ENCODE measurements at regions of chr2 and their contacts with region 1.

Region 1: DNA sequence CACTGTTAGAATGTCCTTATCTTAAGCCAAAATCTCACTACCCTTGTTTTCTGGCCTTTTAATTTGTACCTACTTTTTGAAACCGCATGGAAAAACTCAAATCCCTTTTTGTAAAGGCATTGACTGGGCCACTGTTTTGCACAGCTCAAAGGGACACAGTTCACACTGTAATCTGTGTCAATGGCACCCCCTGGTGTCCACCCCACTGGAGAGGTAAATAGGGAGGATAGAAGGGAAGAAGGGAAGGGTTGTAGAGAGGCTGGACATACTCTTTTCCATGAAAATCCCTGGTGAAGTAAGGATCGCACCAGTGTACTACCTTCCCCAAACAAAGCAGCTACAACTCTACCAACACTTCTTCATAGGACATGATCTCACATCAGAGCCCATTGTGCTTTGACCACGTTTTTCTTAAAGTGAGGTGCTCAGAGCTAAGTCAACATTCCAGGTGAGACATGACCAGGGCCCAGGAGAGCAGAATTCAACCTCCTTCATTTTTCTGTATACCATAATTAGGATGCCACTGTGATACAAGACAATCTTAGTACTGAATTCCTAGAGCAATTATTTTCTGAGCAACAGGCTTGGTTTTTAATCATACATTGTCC is 92.4 kb upstream of the RMDN2 start:
- DNase-seq: peak; percentile 92
- H3K4me3 Mint-ChIP-seq: no peak overlapping the region
- H3K27ac Mint-ChIP-seq: no peak overlapping the region
- H3K4me1 Mint-ChIP-seq: peaks cover 13% of the 10 kb centered on the region
- H3K27me3 Mint-ChIP-seq: no peaks in the 10 kb centered on the region

Region 2: GRCh38 chr2:37168217-37168981 is 664.3 kb before region 1 on chr2:
- CTCF ChIA-PET with region 1: interaction called, 5 read pairs
- intact Hi-C with region 1: loop called (anchors 1 kb)
- DNase-seq: peak; percentile 52
- H3K4me3 Mint-ChIP-seq: no peak overlapping the region
- H3K27ac Mint-ChIP-seq: no peak overlapping the region
- H3K4me1 Mint-ChIP-seq: no peaks in the 10 kb centered on the region
- H3K27me3 Mint-ChIP-seq: no peaks in the 10 kb centered on the region

Region 3: DNA sequence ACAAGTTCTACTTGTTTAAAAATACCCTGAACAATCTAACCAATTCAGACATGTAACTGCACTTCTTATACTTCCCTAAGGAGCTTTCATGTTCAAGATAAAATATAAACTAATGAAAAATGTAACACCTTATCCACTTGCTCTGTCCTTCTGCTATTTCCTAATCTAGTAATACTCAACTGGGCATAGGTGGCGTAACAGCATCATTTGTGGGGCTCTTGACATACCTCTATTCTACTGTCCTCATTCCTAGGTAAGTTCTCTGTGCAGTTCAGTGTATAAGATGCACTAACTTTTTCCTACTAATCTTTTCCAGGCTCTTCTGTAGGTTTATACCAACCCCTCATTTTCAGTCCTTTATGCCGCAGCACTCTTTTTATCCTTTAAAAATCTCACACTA is 544.7 kb before region 1 on chr2:
- CTCF ChIA-PET with region 1: interaction called, 4 read pairs
- intact Hi-C with region 1: loop called (anchors 5 kb)
- DNase-seq: peak; percentile 59
- H3K4me3 Mint-ChIP-seq: no peak overlapping the region
- H3K27ac Mint-ChIP-seq: no peak overlapping the region
- H3K4me1 Mint-ChIP-seq: no peaks in the 10 kb centered on the region
- H3K27me3 Mint-ChIP-seq: no peaks in the 10 kb centered on the region

Region 4: DNA sequence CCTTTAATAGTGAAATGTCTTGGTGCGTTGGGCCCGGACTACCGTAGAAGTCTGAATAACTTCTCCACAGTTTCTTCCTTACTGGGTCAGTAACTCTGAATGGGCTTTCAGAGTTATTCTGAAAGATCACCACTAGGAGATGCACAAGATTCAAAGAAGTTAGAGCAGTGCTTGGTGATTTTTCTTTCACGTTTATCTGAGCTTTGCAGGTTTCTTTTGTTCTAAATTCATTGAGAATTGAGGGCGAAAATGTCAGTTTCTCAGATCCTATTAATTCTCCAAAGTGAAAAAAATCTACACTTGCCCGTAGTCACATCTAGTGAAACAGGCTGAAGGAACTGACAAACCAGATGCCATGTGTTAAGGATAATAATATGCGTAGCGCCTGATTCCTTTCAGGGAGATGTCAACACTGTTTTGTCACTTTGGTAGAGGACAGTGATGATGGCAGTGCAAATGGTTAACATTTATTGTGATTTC is 418.2 kb before region 1 on chr2:
- CTCF ChIA-PET with region 1: interaction called, 42 read pairs
- intact Hi-C with region 1: loop called (anchors 1 kb)
- DNase-seq: no peak
- H3K4me3 Mint-ChIP-seq: no peak overlapping the region
- H3K27ac Mint-ChIP-seq: no peak overlapping the region
- H3K4me1 Mint-ChIP-seq: peaks cover 3% of the 10 kb centered on the region
- H3K27me3 Mint-ChIP-seq: no peaks in the 10 kb centered on the region

Region 5: GRCh38 chr2:37549598-37549997 is 283.1 kb before region 1 on chr2:
- CTCF ChIA-PET with region 1: interaction called, 3 read pairs
- intact Hi-C with region 1: loop called (anchors 1 kb)
- DNase-seq: no peak
- H3K4me3 Mint-ChIP-seq: no peak overlapping the region
- H3K27ac Mint-ChIP-seq: no peak overlapping the region
- H3K4me1 Mint-ChIP-seq: peaks cover 4% of the 10 kb centered on the region
- H3K27me3 Mint-ChIP-seq: no peaks in the 10 kb centered on the region

Region 6: DNA sequence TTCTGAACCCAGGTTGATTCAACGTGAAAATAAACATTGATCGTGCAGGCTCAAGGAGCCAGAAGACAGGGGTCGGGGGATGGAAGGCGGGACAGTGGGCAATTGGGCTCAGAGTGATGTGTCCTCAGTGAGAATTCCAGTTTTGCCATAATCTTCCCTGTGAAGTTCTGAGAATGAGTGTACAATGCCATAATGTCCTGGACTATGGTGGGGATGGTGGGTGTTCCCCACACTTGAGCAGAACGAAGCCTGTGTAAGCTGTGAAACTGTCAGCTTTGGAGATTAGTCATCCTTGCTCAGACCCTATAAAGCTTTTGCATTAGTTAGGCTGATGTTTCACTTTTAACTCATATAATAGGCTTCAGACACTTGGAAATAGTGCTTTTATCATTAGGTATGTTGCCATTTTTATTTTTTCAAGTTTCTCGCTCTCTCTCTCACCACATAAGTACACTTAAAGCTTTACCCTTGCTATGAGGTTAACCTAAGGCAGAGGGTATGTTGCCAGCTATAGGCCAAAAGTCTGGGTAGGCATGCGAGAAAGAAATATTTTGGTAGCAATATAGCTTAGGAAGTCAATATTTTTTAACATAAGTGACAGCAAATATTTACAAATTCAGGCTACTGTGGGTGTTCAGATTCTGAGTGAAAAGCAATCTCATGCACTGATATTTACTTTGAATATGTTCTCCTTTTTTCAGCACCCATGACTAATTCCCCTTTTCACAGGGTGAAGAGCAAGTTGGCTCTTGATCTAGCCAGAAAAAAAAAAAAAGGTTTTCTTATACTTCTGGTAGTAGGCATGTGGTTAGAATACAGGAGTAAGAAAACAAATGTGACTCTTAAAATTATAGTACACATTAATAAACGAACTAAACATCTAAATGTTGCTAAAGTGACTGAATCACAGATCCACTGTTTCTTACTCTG is 208.5 kb before region 1 on chr2:
- CTCF ChIA-PET with region 1: interaction called, 4 read pairs
- intact Hi-C with region 1: loop called (anchors 2 kb)
- DNase-seq: peak; percentile 43
- H3K4me3 Mint-ChIP-seq: no peak overlapping the region
- H3K27ac Mint-ChIP-seq: peak overlapping the region; percentile 38
- H3K4me1 Mint-ChIP-seq: peaks cover 67% of the 10 kb centered on the region
- H3K27me3 Mint-ChIP-seq: no peaks in the 10 kb centered on the region

Region 7: GRCh38 chr2:37740164-37740739 is 92.4 kb before region 1 on chr2:
- CTCF ChIA-PET with region 1: no interaction called
- intact Hi-C with region 1: no loop called
- DNase-seq: no peak
- H3K4me3 Mint-ChIP-seq: no peak overlapping the region
- H3K27ac Mint-ChIP-seq: no peak overlapping the region
- H3K4me1 Mint-ChIP-seq: peaks cover 5% of the 10 kb centered on the region
- H3K27me3 Mint-ChIP-seq: no peaks in the 10 kb centered on the region

Region 8: GRCh38 chr2:37890893-37891495 is 58.3 kb after region 1 on chr2:
- CTCF ChIA-PET with region 1: interaction called, 4 read pairs
- intact Hi-C with region 1: loop called (anchors 5 kb)
- DNase-seq: peak; percentile 81
- H3K4me3 Mint-ChIP-seq: no peak overlapping the region
- H3K27ac Mint-ChIP-seq: no peak overlapping the region
- H3K4me1 Mint-ChIP-seq: peaks cover 34% of the 10 kb centered on the region
- H3K27me3 Mint-ChIP-seq: peaks cover 2% of the 10 kb centered on the region

Measured in activated naive CD4-positive, alpha-beta T cell treated with anti-CD3 and anti-CD28 coated beads for 36 hours (primary cell).